ENCODE measurements at regions of chr1 and their contacts with region 1.

Region 1: GRCh38 chr1:185681034-185681633 is 53.1 kb upstream of the HMCN1 start:
- DNase-seq: peak; percentile 64
- ATAC-seq: peak; percentile 47
- H3K4me3 ChIP-seq: no peak overlapping the region
- H3K4me3 Mint-ChIP-seq: no peak overlapping the region
- H3K27ac ChIP-seq: no peak overlapping the region
- H3K27ac Mint-ChIP-seq: no peak overlapping the region
- H3K4me1 ChIP-seq: peaks cover 9 to 11% of the 10 kb centered on the region in 2 donors
- H3K4me1 Mint-ChIP-seq: peaks cover 19% of the 10 kb centered on the region
- H3K27me3 ChIP-seq: peaks cover 0 to 2% (median 0%) of the 10 kb centered on the region in 4 experiments
- H3K27me3 Mint-ChIP-seq: no peaks in the 10 kb centered on the region
- CTCF ChIP-seq: peak; percentile 68

Region 2: DNA sequence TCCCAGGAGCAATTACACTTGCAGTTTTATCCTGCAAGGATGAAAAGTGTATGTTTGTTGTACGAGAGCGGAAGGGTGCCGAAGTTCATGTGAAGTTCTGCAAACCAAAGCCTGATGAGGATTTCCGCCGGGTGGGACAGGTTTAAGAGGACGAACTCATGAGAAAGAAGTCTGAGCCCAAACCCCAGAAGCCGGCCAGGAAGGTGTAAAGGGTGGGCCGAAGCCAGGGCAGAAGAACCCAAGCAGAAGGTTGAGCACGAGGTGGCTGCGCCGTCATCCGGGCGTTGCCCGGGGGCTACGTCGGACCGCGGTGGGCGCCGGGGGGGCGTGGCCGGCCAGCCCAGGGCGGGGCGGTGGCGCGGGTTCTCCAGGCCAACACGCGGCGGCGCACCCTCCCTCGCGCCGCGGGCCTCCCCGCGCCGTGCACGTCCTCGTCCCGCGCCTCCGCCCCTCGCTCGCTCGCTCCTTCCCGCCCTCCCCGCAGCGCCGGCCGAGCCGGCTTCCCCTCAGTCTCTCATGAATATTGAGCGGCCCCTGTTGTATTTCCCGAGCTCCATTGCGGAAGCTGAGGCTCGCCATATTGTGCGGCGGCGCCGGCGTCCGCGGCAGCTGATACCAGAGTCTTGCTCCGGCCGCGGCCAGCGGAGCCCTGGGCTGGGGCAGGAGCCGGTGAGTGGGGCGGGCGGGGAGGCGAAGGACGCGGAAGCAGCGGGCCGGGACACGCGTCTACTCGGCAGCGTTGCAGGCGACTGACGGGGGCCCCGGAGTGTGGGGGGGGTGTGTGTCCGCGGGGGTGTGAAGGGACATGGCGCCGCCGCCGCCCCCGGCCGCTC is 635.9 kb before region 1 on chr1 and contains the start of gene RNF2:
- CTCF ChIA-PET with region 1: interaction called, 3 read pairs
- POLR2A ChIA-PET with region 1: no interaction called
- intact Hi-C with region 1: loop called (anchors 5 kb)
- DNase-seq: peak; percentile 93
- ATAC-seq: peak; percentile 92
- H3K4me3 ChIP-seq: peak within 1 kb of the TSS; percentile 77 to 96 (median 89)
- H3K4me3 Mint-ChIP-seq: peak within 1 kb of the TSS; percentile 87
- H3K27ac ChIP-seq: peak within 1 kb of the TSS; percentile 72 to 82
- H3K27ac Mint-ChIP-seq: peak within 1 kb of the TSS; percentile 93
- H3K4me1 ChIP-seq: peaks cover 16 to 18% of the 10 kb centered on the region in 2 donors
- H3K4me1 Mint-ChIP-seq: peaks cover 35% of the 10 kb centered on the region
- H3K27me3 ChIP-seq: no peaks in the 10 kb centered on the region
- H3K27me3 Mint-ChIP-seq: no peaks in the 10 kb centered on the region
- CTCF ChIP-seq: no peak
- total RNA-seq, gene RNF2: 24.2 and 29.5 TPM in 2 replicates

Region 3: GRCh38 chr1:185238447-185238846 is 442.7 kb before region 1 on chr1:
- CTCF ChIA-PET with region 1: interaction called, 25 read pairs
- POLR2A ChIA-PET with region 1: no interaction called
- intact Hi-C with region 1: no loop called
- DNase-seq: peak; percentile 10
- ATAC-seq: no peak
- H3K4me3 ChIP-seq: no peak overlapping the region
- H3K4me3 Mint-ChIP-seq: no peak overlapping the region
- H3K27ac ChIP-seq: no peak overlapping the region
- H3K27ac Mint-ChIP-seq: no peak overlapping the region
- H3K4me1 ChIP-seq: no peaks in the 10 kb centered on the region
- H3K4me1 Mint-ChIP-seq: no peaks in the 10 kb centered on the region
- H3K27me3 ChIP-seq: no peaks in the 10 kb centered on the region
- H3K27me3 Mint-ChIP-seq: no peaks in the 10 kb centered on the region
- CTCF ChIP-seq: peak; percentile 31

Region 4: GRCh38 chr1:185595835-185596667 is 85.1 kb before region 1 on chr1:
- CTCF ChIA-PET with region 1: interaction called, 20 read pairs
- POLR2A ChIA-PET with region 1: no interaction called
- intact Hi-C with region 1: no loop called
- DNase-seq: peak; percentile 67
- ATAC-seq: peak; percentile 81
- H3K4me3 ChIP-seq: no peak overlapping the region
- H3K4me3 Mint-ChIP-seq: no peak overlapping the region
- H3K27ac ChIP-seq: no peak overlapping the region
- H3K27ac Mint-ChIP-seq: no peak overlapping the region
- H3K4me1 ChIP-seq: peaks cover 14 to 26% of the 10 kb centered on the region in 2 donors
- H3K4me1 Mint-ChIP-seq: peaks cover 29% of the 10 kb centered on the region
- H3K27me3 ChIP-seq: no peaks in the 10 kb centered on the region
- H3K27me3 Mint-ChIP-seq: no peaks in the 10 kb centered on the region
- CTCF ChIP-seq: peak; percentile 76

Region 5: GRCh38 chr1:185670187-185670627 is 10.9 kb before region 1 on chr1:
- CTCF ChIA-PET with region 1: interaction called, 53 read pairs
- POLR2A ChIA-PET with region 1: no interaction called
- intact Hi-C with region 1: no loop called
- DNase-seq: peak; percentile 73
- ATAC-seq: peak; percentile 65
- H3K4me3 ChIP-seq: no peak overlapping the region
- H3K4me3 Mint-ChIP-seq: no peak overlapping the region
- H3K27ac ChIP-seq: no peak overlapping the region
- H3K27ac Mint-ChIP-seq: no peak overlapping the region
- H3K4me1 ChIP-seq: peaks cover 24 to 26% of the 10 kb centered on the region in 2 donors
- H3K4me1 Mint-ChIP-seq: peaks cover 30% of the 10 kb centered on the region
- H3K27me3 ChIP-seq: no peaks in the 10 kb centered on the region
- H3K27me3 Mint-ChIP-seq: no peaks in the 10 kb centered on the region
- CTCF ChIP-seq: peak; percentile 73

Region 6: GRCh38 chr1:185720633-185721272 is 39.6 kb after region 1 on chr1:
- CTCF ChIA-PET with region 1: interaction called, 13 read pairs
- POLR2A ChIA-PET with region 1: no interaction called
- intact Hi-C with region 1: no loop called
- DNase-seq: peak; percentile 19
- ATAC-seq: no peak
- H3K4me3 ChIP-seq: no peak overlapping the region
- H3K4me3 Mint-ChIP-seq: no peak overlapping the region
- H3K27ac ChIP-seq: no peak overlapping the region
- H3K27ac Mint-ChIP-seq: no peak overlapping the region
- H3K4me1 ChIP-seq: no peaks in the 10 kb centered on the region
- H3K4me1 Mint-ChIP-seq: no peaks in the 10 kb centered on the region
- H3K27me3 ChIP-seq: peaks cover 0 to 6% (median 0%) of the 10 kb centered on the region in 4 experiments
- H3K27me3 Mint-ChIP-seq: peaks cover 28% of the 10 kb centered on the region
- CTCF ChIP-seq: peak; percentile 46

Measured in B cell (primary cell).